H1 (cell line): ENCODE measurements at regions of chr17 and their contacts with region 1.

Region 1: DNA sequence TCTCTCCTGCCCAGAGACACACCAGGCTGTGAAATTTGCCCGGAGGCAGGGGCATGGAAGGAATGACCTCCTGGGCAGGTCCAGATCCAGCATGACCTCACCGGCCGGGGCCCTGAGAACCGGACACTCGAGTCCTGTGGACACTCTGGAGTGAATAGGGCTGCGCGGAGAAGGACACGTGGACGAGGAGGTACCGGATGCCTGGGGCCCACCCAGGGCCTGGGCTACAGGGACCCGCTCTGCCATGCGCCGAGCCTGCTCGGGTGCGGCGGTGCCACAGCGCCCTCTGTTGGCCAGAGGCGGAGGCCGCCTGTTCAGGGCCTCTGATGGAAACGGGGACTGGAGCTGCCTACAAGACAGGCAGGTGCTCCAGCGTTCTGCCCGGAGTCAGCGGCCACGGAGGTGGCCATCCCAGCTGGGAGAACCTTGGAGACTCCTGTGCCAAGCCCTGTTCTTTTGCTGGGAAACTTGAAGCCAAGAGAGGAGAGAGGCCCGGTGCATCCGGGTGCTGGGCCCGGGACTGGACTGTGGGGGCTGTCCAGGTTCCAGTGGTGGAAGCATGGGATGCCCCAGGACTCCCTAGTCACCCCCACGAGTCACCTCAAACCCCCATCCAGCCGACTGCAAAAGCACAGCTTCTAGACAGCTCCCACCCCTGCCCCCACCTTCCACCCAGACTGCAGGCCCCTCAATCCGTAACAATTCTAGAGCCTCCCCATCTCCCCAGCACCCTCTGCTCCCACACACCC is 19.3 kb upstream of the NXPH3 start:
- DNase-seq: peak in 1 of 2 experiments; percentile 98
- H3K4me3 ChIP-seq: peak overlapping the region in 1 of 4 experiments; percentile 15; a peak in 1 of 8 replicates
- H3K27ac ChIP-seq: no peak overlapping the region
- H3K4me1 ChIP-seq: no peaks in the 10 kb centered on the region
- H3K27me3 ChIP-seq: peaks cover 0 to 3% (median 1%) of the 10 kb centered on the region in 4 experiments; a peak in 2 of 7 replicates
- CTCF ChIP-seq: peak; percentile 94 to 98 (median 98)
- EP300 ChIP-seq: peak in 1 of 2 experiments; percentile 36; a peak in 1 of 3 replicates
- POLR2A ChIP-seq: no peak
- RAD21 ChIP-seq: peak; percentile 97 to 99

Region 2: GRCh38 chr17:49305926-49306325 is 250.5 kb before region 1 on chr17:
- CTCF ChIA-PET with region 1: no interaction called
- POLR2A ChIA-PET with region 1: no interaction called
- DNase-seq: no peak
- H3K4me3 ChIP-seq: no peak overlapping the region
- H3K27ac ChIP-seq: no peak overlapping the region
- H3K4me1 ChIP-seq: no peaks in the 10 kb centered on the region
- H3K27me3 ChIP-seq: no peaks in the 10 kb centered on the region
- CTCF ChIP-seq: no peak
- EP300 ChIP-seq: no peak
- POLR2A ChIP-seq: no peak
- RAD21 ChIP-seq: no peak

Region 3: GRCh38 chr17:49414622-49415350 is 141.6 kb before region 1 on chr17 and contains the start of gene PHB1:
- CTCF ChIA-PET with region 1: interaction called, 138 read pairs
- POLR2A ChIA-PET with region 1: interaction called, 4 read pairs
- DNase-seq: peak; percentile 90 to 95
- H3K4me3 ChIP-seq: peak within 1 kb of the TSS; percentile 92 to 99 (median 96)
- H3K27ac ChIP-seq: no peak within 1 kb of the TSS
- H3K4me1 ChIP-seq: no peaks in the 10 kb centered on the region
- H3K27me3 ChIP-seq: no peaks in the 10 kb centered on the region
- CTCF ChIP-seq: no peak
- EP300 ChIP-seq: no peak
- POLR2A ChIP-seq: peak in 1 of 2 experiments; percentile 46; a peak in 1 of 3 replicates
- RAD21 ChIP-seq: no peak
- total RNA-seq, gene PHB1: 386 and 401 TPM in 2 replicates

Region 4: GRCh38 chr17:49456183-49456965 is 100.0 kb before region 1 on chr17:
- CTCF ChIA-PET with region 1: interaction called, 12 read pairs
- POLR2A ChIA-PET with region 1: no interaction called
- DNase-seq: no peak
- H3K4me3 ChIP-seq: no peak overlapping the region
- H3K27ac ChIP-seq: no peak overlapping the region
- H3K4me1 ChIP-seq: peaks cover 0 to 19% (median 3%) of the 10 kb centered on the region in 4 experiments; a peak in 4 of 7 replicates
- H3K27me3 ChIP-seq: peaks cover 0 to 3% (median 0%) of the 10 kb centered on the region in 4 experiments; a peak in 1 of 7 replicates
- CTCF ChIP-seq: no peak
- EP300 ChIP-seq: no peak
- POLR2A ChIP-seq: no peak
- RAD21 ChIP-seq: no peak

Region 5: DNA sequence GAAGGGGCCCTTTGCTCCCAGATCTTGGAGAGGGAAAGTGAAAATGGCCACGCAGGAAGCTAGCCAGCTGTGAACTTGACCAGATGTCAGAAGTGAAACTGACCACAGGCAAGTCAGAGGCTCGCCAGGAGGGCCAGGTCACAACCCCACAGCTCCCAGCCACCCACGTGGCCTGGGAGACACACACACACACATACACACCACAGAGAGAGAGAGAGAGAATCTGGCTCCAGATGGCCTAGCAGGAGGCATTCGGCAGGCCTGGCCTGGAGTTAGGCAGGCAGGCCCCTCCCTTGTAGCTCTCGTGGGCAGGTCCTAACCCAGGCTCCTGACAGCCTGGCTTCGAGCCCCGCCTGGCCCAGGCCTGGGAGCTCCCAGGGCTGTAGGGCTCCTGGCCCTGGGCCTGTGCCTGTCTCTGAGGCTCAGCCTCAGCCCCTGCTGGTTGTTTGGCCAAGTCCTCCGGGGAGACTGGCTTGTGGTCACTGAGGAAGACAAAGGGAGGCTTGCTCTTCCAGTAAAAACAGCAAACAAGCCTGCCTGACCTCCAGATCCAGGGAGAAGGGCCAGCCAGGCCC is 41.1 kb before region 1 on chr17:
- CTCF ChIA-PET with region 1: interaction called, 205 read pairs
- POLR2A ChIA-PET with region 1: no interaction called
- DNase-seq: peak in 1 of 2 experiments; percentile 70
- H3K4me3 ChIP-seq: no peak overlapping the region
- H3K27ac ChIP-seq: no peak overlapping the region
- H3K4me1 ChIP-seq: peaks cover 16 to 41% (median 22%) of the 10 kb centered on the region in 4 experiments
- H3K27me3 ChIP-seq: no peaks in the 10 kb centered on the region
- CTCF ChIP-seq: no peak; a peak in 1 of 4 replicates
- EP300 ChIP-seq: no peak
- POLR2A ChIP-seq: no peak; a peak in 1 of 3 replicates
- RAD21 ChIP-seq: peak; percentile 7 to 33; a peak in 3 of 4 replicates

Region 6: GRCh38 chr17:49575579-49576087 is 19.2 kb after region 1 on chr17 and contains the start of gene NXPH3:
- CTCF ChIA-PET with region 1: interaction called, 39 read pairs
- POLR2A ChIA-PET with region 1: interaction called, 5 read pairs
- DNase-seq: peak in 1 of 2 experiments; percentile 97
- H3K4me3 ChIP-seq: peak within 1 kb of the TSS; percentile 58 to 79 (median 72)
- H3K27ac ChIP-seq: no peak within 1 kb of the TSS; the same call in 1 of the 2 replicates
- H3K4me1 ChIP-seq: peaks cover 0 to 23% (median 10%) of the 10 kb centered on the region in 4 experiments; a peak in 6 of 7 replicates
- H3K27me3 ChIP-seq: peaks cover 4 to 14% (median 10%) of the 10 kb centered on the region in 4 experiments; a peak in 5 of 7 replicates
- CTCF ChIP-seq: peak; percentile 74 to 80 (median 76)
- EP300 ChIP-seq: peak in 1 of 2 experiments; percentile 60; a peak in 1 of 3 replicates
- POLR2A ChIP-seq: no peak
- RAD21 ChIP-seq: peak in 1 of 2 experiments; percentile 50; a peak in 2 of 4 replicates
- total RNA-seq, gene NXPH3: 3.3 and 3.7 TPM in 2 replicates

Region 7: GRCh38 chr17:49707608-49708514 is 151.5 kb after region 1 on chr17 and contains the start of gene SLC35B1:
- CTCF ChIA-PET with region 1: interaction called, 228 read pairs
- POLR2A ChIA-PET with region 1: interaction called, 3 read pairs
- DNase-seq: peak; percentile 94 to 97
- H3K4me3 ChIP-seq: peak within 1 kb of the TSS; percentile 76 to 97 (median 90)
- H3K27ac ChIP-seq: peak within 1 kb of the TSS; percentile 100
- H3K4me1 ChIP-seq: peaks cover 2 to 3% (median 3%) of the 10 kb centered on the region in 4 experiments; a peak in 6 of 7 replicates
- H3K27me3 ChIP-seq: no peaks in the 10 kb centered on the region
- CTCF ChIP-seq: peak; percentile 90 to 95 (median 91)
- EP300 ChIP-seq: 0 out of 3 replicates have a peak, but pooled peaks of 1 of the 2 experiments have one; percentile 26
- POLR2A ChIP-seq: peak; percentile 79 to 88
- RAD21 ChIP-seq: peak; percentile 52 to 68
- total RNA-seq, gene SLC35B1: 56.5 and 60.0 TPM in 2 replicates

Region 8: DNA sequence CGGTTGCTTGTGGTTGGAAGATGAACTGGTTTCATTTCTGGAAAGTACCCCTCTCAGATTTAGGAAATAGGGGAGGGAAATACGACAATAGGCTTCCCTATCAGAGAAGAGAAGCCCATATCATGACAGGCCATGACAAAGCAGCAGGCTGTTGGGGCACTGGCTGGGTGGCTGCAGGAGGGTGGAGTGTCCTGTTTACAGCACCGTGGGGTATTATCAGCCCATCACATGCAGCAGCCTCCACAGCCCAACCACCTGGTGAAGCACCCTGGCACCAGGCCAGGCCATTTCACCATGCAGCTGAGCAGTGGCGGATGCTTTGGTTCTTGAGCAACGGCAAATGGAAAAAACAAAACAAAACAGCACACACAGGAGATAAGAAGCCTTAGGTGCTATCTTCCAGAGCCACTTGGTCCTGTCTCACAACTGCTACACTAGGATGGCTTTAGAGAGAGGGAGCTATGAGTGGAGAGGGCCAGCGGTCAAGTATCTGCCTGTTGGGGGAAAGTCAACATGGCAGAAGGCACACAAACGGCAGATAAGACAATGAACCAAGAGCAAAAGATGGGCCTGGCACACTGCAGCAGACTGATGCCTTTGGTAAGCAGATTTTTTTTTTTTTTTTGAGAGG is 183.4 kb after region 1 on chr17:
- CTCF ChIA-PET with region 1: no interaction called
- POLR2A ChIA-PET with region 1: no interaction called
- DNase-seq: no peak
- H3K4me3 ChIP-seq: no peak overlapping the region
- H3K27ac ChIP-seq: no peak overlapping the region
- H3K4me1 ChIP-seq: no peaks in the 10 kb centered on the region
- H3K27me3 ChIP-seq: no peaks in the 10 kb centered on the region
- CTCF ChIP-seq: no peak
- EP300 ChIP-seq: no peak
- POLR2A ChIP-seq: no peak
- RAD21 ChIP-seq: no peak